CD4-positive, alpha-beta T cell (primary cell): ENCODE measurements at regions of chrX and their contacts with region 1.

Region 1: DNA sequence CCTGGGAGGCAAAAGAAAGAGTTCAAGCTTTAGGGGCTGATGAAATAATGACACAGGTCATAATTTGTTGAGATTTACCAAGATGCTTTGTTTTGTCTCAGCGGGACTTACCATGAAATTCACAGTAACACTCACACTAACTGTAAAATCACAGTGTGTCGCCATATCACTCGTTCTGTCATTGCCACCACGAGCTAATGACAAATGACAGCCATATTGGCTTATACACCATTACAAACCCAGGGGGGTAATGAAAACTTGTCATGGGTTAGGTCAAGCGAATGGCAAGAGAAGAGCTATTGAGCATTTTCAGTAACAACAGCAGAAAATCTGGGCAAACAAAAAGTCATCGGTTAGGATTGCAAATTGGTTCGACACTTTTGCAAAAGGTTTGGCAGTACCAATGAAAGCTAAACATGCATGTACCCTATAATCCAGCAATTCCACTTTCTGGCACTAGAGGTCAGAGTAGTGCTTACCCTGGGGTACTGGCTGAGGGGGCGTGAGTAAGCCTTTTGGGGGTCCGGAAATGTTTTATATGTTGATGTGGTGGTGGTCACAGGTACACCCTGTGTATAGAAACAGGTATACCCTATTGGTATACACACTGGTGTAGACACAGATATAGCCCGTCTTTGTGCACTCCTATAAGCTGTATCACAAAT is 83.9 kb upstream of the RAI2 start:
- DNase-seq: peak in 4 of 14 experiments; percentile 11 to 38 (median 24)
- ATAC-seq: no peak
- H3K4me3 ChIP-seq: no peak overlapping the region
- H3K4me3 Mint-ChIP-seq: no peak overlapping the region
- H3K27ac ChIP-seq: no peak overlapping the region
- H3K27ac Mint-ChIP-seq: no peak overlapping the region
- H3K4me1 ChIP-seq: no peaks in the 10 kb centered on the region
- H3K4me1 Mint-ChIP-seq: no peaks in the 10 kb centered on the region
- H3K27me3 ChIP-seq: no peaks in the 10 kb centered on the region
- H3K27me3 Mint-ChIP-seq: no peaks in the 10 kb centered on the region
- CTCF ChIP-seq: peak; percentile 55

Region 2: DNA sequence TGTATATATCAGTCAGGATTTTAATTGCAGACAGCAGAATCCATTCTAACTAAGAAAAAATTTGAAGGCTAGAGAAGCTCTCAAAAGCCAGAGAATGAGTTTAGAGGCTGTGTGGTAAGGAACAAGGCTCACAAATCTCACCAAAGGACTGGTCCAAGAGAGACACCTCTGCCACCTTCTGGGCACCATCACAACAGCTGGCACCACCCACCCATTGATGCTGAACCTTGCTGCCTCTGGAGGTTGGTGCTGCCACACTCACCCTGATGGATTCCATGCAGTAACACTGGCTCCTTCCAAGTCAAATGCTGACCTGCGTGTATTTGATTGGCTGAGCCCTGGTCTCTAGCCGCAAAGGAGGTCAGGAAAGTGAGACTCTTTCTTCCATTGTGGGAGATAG is 174.9 kb after region 1 on chrX:
- CTCF ChIA-PET with region 1: interaction called, 3 read pairs
- POLR2A ChIA-PET with region 1: no interaction called
- intact Hi-C with region 1: loop called in 1 of 2 experiments (anchors 5 kb)
- DNase-seq: peak in 8 of 14 experiments; percentile 1 to 31 (median 8)
- ATAC-seq: peak; percentile 46
- H3K4me3 ChIP-seq: no peak overlapping the region
- H3K4me3 Mint-ChIP-seq: no peak overlapping the region
- H3K27ac ChIP-seq: no peak overlapping the region
- H3K27ac Mint-ChIP-seq: no peak overlapping the region
- H3K4me1 ChIP-seq: no peaks in the 10 kb centered on the region
- H3K4me1 Mint-ChIP-seq: no peaks in the 10 kb centered on the region
- H3K27me3 ChIP-seq: no peaks in the 10 kb centered on the region
- H3K27me3 Mint-ChIP-seq: peaks cover 5% of the 10 kb centered on the region
- CTCF ChIP-seq: no peak

Region 3: DNA sequence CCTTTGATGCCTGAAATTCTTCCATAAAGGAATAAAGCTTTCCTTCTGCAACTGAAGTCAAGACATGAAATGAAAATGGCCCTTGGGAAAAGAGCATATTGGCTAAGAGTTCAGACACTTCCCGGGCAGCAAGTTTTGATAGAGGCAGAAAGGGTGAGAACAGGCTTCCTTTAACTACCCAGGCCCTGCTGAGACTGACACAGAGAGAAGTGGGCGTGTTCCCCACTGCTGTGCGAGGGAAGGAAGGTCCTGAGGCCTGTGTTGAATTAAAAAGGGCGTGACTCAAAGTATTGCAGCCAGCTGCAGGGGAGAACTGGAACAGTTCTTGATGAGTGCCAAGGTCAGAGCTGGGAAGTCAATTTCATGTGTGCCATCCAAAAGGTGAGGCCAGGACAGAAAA is 1211.2 kb after region 1 on chrX:
- CTCF ChIA-PET with region 1: no interaction called
- POLR2A ChIA-PET with region 1: no interaction called
- intact Hi-C with region 1: no loop called
- DNase-seq: no peak
- ATAC-seq: no peak
- H3K4me3 ChIP-seq: no peak overlapping the region
- H3K4me3 Mint-ChIP-seq: no peak overlapping the region
- H3K27ac ChIP-seq: no peak overlapping the region
- H3K27ac Mint-ChIP-seq: no peak overlapping the region
- H3K4me1 ChIP-seq: no peaks in the 10 kb centered on the region
- H3K4me1 Mint-ChIP-seq: no peaks in the 10 kb centered on the region
- H3K27me3 ChIP-seq: no peaks in the 10 kb centered on the region
- H3K27me3 Mint-ChIP-seq: peaks cover 7% of the 10 kb centered on the region
- CTCF ChIP-seq: no peak